GM10248 (cell line): ENCODE measurements at regions of chr6 and their contacts with region 1.

Region 1: DNA sequence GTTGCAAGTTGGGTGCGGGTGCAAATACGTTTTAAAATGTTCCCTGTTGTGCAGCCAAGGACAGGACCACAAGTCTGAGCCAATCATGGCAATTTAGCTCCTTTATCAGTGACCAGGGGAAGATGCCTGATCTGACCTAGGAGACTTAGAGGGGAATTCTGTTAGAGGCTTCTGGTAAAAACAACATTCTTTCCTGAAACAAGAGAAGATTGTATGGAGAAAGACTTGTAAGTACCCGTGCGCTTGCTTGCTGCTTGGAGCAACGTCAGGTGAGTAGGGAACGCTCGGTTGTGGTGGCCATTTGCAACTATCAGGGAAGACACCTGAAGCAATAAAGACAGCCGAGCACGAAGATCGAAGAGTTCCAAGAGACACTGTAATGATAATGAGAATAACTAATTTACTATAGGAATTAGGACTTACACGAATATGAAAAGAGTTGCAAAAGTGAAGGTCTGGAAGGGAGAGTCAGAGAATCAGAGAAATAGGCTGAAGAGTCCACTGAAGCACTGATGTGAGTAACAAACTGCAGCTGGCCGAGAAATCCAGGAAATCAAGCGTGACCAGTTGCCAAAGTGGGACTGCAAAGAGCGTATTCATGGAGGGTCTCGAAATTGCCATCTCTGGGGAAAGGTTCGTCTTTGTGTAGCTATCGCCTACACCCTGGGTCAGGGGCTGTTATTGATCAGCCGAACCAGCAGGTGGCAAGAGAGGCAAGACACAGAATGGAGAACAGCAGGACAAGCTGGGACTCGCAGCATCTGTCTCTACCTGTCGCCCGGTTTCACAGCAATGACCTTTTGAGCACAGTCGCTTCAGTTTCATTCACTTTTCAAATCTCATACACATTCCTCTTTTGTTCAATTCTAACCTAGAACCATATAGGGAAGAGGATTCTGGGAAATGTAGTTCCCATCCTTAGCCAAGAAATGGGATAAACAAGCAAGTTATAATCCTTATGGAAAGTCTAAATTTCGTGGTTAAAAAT is 26.1 kb downstream of the LOC128125822 start:
- DNase-seq: peak; percentile 80
- CTCF ChIP-seq: peak; percentile 81

Region 2: GRCh38 chr6:63352587-63353285 is 245.6 kb before region 1 on chr6:
- CTCF ChIA-PET with region 1: interaction called, 17 read pairs
- POLR2A ChIA-PET with region 1: no interaction called
- DNase-seq: peak; percentile 62
- CTCF ChIP-seq: peak; percentile 76

Region 3: DNA sequence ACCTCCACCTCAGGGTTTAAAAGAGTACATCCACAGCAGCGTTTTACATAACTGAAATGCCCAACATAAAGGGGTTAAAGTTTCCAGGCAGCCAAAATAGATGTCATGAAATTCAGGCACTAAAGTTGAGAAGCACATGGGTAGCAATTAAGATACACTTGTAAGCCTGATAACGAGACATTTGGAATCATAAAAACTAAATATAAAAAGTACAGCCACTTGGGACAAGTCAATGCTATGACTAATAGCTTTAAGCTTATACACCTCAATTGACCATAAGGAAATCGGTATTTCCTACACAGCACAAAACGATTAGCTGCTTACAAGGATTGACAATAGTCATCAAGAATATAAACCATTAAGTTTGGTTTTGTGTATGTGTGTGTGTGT is 14.2 kb before region 1 on chr6:
- CTCF ChIA-PET with region 1: interaction called, 34 read pairs
- POLR2A ChIA-PET with region 1: interaction called, 3 read pairs
- DNase-seq: no peak
- CTCF ChIP-seq: no peak

Region 4: DNA sequence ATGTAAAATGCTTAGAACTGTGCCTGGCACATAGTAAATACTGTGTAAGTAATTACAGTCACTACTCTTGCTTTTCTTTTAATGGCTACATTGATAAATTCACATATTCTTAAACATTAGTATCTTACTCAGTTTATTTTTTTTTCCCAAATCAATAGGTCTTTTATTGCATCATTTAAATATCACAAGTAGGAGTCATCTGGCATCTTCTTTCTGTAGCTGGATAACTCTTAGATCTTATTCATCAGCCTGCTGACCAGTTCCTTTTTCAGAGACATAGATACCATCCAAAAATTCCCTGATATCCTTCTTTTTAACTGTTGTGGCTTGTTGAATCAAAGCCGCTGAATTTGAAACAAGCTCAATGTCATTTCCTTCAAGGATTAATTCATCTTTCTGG is 17.2 kb after region 1 on chr6:
- CTCF ChIA-PET with region 1: interaction called, 55 read pairs
- POLR2A ChIA-PET with region 1: no interaction called
- DNase-seq: no peak
- CTCF ChIP-seq: no peak

Region 5: DNA sequence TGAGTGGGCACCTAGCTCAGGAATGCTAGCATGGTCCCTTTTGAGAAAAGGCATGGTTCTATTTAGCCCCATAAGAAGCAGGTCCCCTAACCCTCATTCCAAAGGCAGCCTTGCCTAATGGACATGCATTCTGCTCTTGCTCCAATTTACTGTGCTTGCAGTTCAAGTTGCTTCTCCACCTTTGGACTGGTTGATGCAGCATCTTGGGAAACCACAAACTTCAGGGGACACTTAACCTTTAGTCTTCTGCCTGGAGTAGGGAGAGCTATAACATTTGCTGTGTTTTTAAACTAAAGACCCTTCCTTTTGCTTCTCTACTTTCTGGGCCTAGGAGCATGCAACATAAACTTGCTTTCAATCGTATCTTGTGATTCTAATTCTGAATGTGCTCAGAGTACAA is 32.1 kb after region 1 on chr6:
- CTCF ChIA-PET with region 1: interaction called, 17 read pairs
- POLR2A ChIA-PET with region 1: no interaction called
- DNase-seq: no peak
- CTCF ChIP-seq: no peak

Region 6: GRCh38 chr6:63649269-63649668 is 50.9 kb after region 1 on chr6:
- CTCF ChIA-PET with region 1: interaction called, 12 read pairs
- POLR2A ChIA-PET with region 1: no interaction called
- DNase-seq: no peak
- CTCF ChIP-seq: no peak

Region 7: DNA sequence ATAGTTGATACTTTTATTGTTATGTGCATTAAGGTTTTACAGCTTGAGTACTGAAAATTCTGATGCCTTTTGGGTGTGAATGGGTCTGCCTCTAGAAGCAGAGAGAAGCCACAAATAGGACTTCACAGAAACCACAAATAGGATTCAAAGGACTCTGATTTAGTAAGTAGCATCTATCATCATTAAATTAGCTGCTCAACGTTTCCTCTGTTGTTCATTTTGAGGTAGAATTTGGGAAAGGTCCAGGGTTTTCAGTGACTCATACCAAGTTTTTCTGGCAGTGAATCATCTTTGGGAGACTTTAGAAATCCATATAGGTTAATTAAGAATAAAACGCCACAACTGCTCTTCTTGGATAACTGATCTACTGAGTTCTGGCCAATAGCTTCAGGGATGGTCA is 142.4 kb after region 1 on chr6:
- CTCF ChIA-PET with region 1: no interaction called
- POLR2A ChIA-PET with region 1: no interaction called
- DNase-seq: no peak
- CTCF ChIP-seq: no peak

Region 8: GRCh38 chr6:63764318-63764916 is 166.1 kb after region 1 on chr6:
- CTCF ChIA-PET with region 1: interaction called, 120 read pairs
- POLR2A ChIA-PET with region 1: no interaction called
- DNase-seq: no peak
- CTCF ChIP-seq: peak; percentile 48